Mucosa of descending colon (tissue), 3 donors: ENCODE measurements at regions of chr14 and their contacts with region 1.

Region 1: DNA sequence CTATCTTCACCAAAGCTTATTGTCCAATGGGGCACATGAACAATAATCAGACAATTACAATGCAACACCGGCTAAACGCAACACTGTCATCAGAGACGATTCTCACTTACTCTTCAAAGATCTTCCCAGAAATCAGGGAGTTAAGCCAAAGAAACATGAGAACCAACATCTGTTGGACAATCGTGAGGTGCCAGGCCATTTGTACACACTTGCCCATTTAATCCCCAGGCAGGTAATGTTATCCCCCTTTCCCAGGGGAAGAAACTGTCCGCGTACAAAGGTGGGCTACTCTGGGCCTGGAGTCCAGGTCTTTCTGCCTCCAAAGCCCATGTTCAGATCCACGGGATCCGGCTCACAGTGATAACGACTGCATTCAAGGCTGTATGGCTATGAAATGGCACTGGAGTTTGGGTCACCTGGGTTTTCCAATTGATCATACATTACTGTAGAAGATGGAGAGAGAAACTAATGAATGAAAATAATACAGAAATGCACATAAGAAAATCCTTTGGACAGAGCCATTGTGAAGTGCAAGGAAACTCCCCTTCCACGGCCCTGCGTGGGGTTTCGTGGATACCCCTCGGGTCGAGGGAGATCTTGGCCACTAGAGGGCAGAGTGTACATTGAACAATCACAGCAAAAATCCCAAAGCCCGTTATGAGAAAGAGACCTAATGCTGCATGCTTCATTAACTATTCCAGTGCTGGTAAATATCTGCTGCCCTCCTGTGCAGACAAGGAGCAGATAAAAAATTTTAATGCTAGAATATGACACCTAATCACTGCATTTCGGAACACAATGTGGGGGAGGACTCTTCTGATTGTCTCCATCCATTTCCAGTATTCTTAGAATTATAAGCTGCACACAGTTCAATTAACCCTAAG is 111.4 kb downstream of the EGLN3 start:
- DNase-seq: peak in 2 of 3 donors; percentile 45 to 75
- ATAC-seq: peak; percentile 67
- H3K4me3 ChIP-seq: no peak overlapping the region
- H3K4me1 ChIP-seq: peaks cover 3% of the 10 kb centered on the region
- CTCF ChIP-seq: peak; percentile 74

Region 2: DNA sequence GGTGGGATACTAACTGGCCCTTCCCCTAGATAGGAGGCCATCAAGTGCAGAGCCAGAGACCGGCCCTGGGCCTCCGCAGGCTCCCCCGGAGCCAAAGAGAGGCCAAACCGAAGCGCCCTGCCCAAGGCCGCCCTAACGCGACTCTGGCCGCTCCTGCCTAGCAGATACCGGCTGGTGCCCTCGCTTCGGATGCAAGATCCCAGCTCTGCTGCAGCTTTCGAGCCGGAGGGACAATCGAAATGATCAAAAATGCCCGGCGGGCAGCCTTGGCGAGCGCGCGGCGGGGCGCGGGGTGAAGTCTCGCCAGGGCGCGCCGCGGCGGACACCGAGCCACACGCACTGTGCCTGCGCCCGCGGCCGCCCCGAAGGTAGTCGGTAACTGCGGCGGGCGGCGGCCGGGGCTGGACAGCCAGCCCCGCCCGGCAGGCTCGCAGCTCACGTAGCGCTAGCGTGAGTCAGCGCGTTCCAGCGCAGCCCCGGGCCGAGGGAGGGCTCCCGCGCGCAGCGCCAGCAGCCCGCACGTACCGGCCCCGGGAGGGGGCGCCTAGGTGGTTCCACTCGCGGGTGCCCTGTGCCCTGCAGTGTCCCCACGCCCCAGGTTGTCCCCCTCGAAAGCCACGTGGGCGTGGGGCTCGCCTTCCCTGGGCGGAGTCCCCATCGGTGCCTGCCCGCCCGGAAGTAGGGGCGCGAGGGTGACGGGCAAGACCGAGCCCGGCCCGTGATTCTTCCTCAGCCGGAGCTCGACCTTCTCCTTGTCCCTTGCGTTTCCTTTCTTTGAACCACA is 220.6 kb after region 1 on chr14:
- intact Hi-C with region 1: no loop called
- DNase-seq: peak; percentile 86 to 92 (median 89)
- ATAC-seq: peak; percentile 97
- H3K4me3 ChIP-seq: peak overlapping the region; percentile 22
- H3K4me1 ChIP-seq: peaks cover 5% of the 10 kb centered on the region
- CTCF ChIP-seq: no peak

Region 3: DNA sequence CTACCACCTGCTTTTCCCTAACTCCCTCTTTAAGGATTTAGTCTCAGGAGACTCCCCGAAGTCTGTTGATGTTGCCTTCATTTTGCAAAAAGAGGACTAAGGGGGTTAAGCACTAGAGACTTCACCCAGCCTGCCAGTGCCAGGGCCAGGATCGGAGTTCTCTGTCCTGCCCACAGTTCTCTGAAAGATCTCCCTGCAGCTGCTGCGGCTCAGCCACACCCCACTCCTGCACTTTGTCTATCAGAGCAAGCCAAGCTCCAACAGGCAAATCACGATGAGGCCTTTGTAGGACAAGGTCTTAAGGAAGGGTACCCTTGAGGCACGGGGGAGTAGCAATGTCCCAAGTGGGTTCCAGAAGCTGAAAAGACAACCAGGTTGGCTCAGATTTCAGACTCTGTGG is 260.2 kb after region 1 on chr14:
- intact Hi-C with region 1: loop called (anchors 10 kb)
- DNase-seq: peak in 2 of 3 donors; percentile 50 to 52
- ATAC-seq: peak; percentile 75
- H3K4me3 ChIP-seq: no peak overlapping the region
- H3K4me1 ChIP-seq: peaks cover 7% of the 10 kb centered on the region
- CTCF ChIP-seq: no peak

Region 4: DNA sequence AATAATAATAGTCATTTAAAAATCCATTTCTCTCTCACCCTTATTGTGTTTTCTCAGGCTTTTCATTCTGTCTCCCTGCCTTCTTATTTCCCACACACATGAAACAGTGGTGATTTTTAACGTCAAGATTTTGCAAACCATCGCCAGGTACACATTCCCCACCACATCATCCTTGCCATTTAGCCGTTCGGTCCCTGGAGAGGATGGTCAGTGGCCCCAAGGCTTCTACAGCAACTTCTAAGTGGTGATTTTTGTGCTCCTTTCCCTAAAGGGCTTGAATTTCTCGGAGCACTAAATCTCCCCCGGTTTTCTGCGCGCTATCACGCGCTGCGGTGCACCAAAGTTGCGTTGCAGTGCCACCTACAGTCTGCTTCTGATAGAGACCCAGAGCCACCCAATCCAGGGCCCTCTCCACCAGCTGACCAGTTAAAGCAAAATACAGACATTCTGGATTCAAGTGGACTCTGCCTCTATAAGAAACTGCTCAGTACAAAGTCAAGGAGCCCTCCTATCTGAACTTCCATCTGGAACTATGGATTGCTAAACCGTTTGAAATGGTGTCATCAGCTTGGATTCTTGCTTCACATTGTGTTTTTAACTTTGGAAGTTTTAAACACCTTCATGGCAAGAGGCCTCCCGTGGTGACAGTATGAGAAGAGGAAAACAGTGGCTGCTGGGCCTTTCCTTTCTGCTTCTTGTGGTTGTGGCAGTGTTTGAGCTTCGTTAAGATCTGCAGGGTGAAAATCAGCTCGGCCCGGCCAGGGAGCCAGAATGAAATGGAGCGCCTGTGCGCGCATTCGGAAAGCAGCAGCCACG is 388.6 kb after region 1 on chr14:
- intact Hi-C with region 1: loop called (anchors 5 to 10 kb)
- DNase-seq: peak; percentile 57 to 84 (median 75)
- ATAC-seq: peak; percentile 88
- H3K4me3 ChIP-seq: no peak overlapping the region
- H3K4me1 ChIP-seq: peaks cover 21% of the 10 kb centered on the region
- CTCF ChIP-seq: peak; percentile 60

Region 5: DNA sequence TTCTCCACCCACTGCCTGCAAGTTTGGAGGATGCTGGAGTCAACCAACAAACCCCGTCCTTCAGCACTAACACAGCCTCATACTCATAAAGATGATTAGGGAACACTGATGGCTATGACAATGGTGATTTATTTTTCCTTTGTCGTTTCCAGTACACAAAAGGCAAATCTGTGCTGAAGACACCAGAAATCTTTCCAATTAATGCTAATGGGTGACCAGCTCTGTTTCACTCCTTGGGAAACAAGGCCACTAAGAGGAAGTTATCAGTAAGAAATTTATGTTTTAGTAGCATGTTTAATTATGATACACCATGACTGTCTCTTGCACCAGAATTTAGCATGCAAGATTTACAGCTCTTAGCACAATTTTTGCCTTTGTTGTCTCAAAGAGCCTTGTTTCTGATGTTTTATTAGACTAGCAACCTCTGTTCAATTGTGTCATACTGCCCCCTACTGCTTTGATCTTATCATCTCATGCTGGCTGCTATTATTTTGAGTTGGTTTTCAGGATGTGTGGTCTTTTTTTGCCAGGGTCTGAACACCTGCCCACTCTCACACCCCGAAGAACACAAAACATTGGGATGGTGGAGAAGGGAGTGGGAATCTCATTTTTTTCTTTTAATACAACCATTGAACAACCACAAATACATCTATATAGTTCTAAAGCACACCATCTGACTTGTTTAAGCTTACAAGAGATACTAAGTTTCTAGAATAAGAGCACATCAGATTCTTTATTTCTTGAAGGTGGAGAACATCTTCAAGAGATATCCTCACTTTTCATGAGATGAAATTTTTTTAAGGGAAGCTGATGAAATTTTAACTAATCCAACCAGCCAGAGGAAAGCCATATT is 461.7 kb after region 1 on chr14:
- intact Hi-C with region 1: loop called in 1 of 2 experiments (anchors 10 kb)
- DNase-seq: peak in 1 of 3 donors; percentile 61
- ATAC-seq: peak; percentile 61
- H3K4me3 ChIP-seq: no peak overlapping the region
- H3K4me1 ChIP-seq: peaks cover 12% of the 10 kb centered on the region
- CTCF ChIP-seq: peak; percentile 16